HepG2 (cell line): ENCODE measurements at regions of chr12 and their contacts with region 1.

Region 1: DNA sequence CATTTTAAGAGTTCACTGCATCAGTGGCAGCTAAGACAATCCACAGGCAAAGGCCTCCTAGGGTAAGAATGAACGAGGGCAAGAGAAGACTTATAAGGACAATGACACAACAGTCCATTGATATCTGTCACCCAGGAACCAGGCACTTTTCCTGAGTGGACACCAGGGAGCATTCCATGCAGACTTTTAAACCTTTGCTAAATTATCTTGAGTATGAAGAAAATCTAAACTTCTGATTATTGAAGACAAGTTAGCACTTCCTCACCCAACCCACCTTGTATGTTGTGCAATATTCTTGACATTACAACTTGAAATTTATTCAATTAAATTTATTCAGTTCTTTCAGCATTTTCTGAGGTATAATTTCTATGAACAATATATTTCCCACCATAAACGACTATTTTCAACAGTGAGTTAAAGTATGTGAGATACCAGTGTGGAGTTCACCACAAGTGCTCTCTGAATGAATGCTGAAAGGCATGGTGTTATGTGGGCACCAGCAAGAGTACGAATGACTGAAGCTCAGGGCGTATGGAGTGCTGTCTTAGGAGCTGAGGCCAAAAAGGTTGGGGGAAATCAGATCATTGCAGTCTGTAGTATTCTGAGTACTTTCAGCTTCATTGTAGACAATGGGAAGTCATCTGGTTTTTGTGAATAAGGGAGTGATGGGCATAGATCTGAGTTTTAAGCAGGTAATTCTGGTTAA is 124.3 kb upstream of the LMNTD1 start:
- DNase-seq: no peak
- ATAC-seq: no peak
- H3K4me3 ChIP-seq: no peak overlapping the region
- H3K27ac ChIP-seq: no peak overlapping the region
- H3K4me1 ChIP-seq: no peaks in the 10 kb centered on the region
- H3K27me3 ChIP-seq: no peaks in the 10 kb centered on the region
- CTCF ChIP-seq: 0 out of 2 replicates have a peak, but pooled peaks have one; percentile 9
- EP300 ChIP-seq: no peak
- POLR2A ChIP-seq: no peak
- RAD21 ChIP-seq: no peak

Region 2: GRCh38 chr12:25648460-25648859 is 28.9 kb before region 1 on chr12:
- CTCF ChIA-PET with region 1: no interaction called
- POLR2A ChIA-PET with region 1: no interaction called
- in situ Hi-C with region 1: no loop called
- intact Hi-C with region 1: no loop called
- DNase-seq: no peak
- ATAC-seq: no peak; the same call in 2 of the 3 replicates
- H3K4me3 ChIP-seq: no peak overlapping the region
- H3K27ac ChIP-seq: no peak overlapping the region
- H3K4me1 ChIP-seq: no peaks in the 10 kb centered on the region
- H3K27me3 ChIP-seq: no peaks in the 10 kb centered on the region
- CTCF ChIP-seq: no peak
- EP300 ChIP-seq: no peak
- POLR2A ChIP-seq: no peak
- RAD21 ChIP-seq: no peak

Region 3: GRCh38 chr12:25839455-25839854 is 162.1 kb after region 1 on chr12:
- CTCF ChIA-PET with region 1: no interaction called
- POLR2A ChIA-PET with region 1: no interaction called
- in situ Hi-C with region 1: no loop called
- intact Hi-C with region 1: no loop called
- DNase-seq: no peak
- ATAC-seq: no peak
- H3K4me3 ChIP-seq: no peak overlapping the region
- H3K27ac ChIP-seq: no peak overlapping the region
- H3K4me1 ChIP-seq: no peaks in the 10 kb centered on the region
- H3K27me3 ChIP-seq: no peaks in the 10 kb centered on the region
- CTCF ChIP-seq: no peak
- EP300 ChIP-seq: no peak
- POLR2A ChIP-seq: no peak
- RAD21 ChIP-seq: no peak

Region 4: GRCh38 chr12:26017484-26018206 is 340.3 kb after region 1 on chr12:
- CTCF ChIA-PET with region 1: no interaction called
- POLR2A ChIA-PET with region 1: no interaction called
- in situ Hi-C with region 1: no loop called
- intact Hi-C with region 1: loop called (anchors 2 kb)
- DNase-seq: peak; percentile 50
- ATAC-seq: peak; percentile 58; the same call in 2 of the 3 replicates
- H3K4me3 ChIP-seq: no peak overlapping the region
- H3K27ac ChIP-seq: no peak overlapping the region
- H3K4me1 ChIP-seq: no peaks in the 10 kb centered on the region
- H3K27me3 ChIP-seq: no peaks in the 10 kb centered on the region; a peak in 1 of 5 replicates
- CTCF ChIP-seq: peak; percentile 72
- EP300 ChIP-seq: no peak
- POLR2A ChIP-seq: no peak
- RAD21 ChIP-seq: peak; percentile 45; the same call in 1 of the 2 replicates